Activated CD8-positive, alpha-beta memory T cell treated with anti-CD3 and anti-CD28 coated beads, Interleukin-2, amount 10 ng/mL, durations not matched to agents 7 days and 5 days (primary cell): ENCODE measurements at regions of chr10 and their contacts with region 1.

Region 1: DNA sequence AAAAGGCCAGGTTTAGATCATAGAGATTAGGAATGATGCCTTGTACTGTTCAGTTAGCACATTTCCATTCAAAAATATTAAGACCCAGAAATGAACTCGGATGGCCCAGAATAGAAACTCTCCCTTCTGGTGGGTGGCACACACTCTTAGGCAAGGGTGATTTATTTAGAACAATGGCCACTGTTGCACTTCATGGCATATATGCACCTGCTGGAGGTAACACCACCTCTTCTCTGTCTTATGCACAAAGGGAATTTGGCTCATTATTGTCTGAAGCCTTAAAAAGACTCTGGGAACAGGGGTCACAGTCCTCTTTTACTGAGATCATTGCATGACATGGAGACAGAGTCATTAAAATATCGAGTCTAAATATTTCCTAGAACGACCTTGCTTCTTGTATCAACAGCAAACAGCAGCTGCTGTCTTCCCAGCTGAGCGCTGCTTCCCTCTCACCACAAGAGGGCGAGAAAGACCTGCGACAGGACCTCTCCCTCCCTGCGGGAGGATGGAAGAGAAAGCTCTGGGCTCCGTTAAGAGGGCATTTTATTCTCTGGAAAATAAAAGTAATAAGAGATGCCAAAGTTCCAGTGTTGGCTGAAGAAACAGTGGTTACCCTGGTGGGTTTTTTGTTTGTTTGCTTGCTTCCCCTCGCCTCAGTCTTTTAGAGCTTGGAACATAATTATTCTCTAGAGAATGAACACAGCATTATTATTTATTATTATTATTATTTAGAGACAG is 13.6 kb upstream of the BAMBI start:
- DNase-seq: peak; percentile 80
- ATAC-seq: peak; percentile 72
- H3K4me3 Mint-ChIP-seq: no peak overlapping the region
- H3K27ac Mint-ChIP-seq: no peak overlapping the region
- H3K4me1 Mint-ChIP-seq: peaks cover 7% of the 10 kb centered on the region
- H3K27me3 Mint-ChIP-seq: peaks cover 38% of the 10 kb centered on the region

Region 2: GRCh38 chr10:28620251-28620650 is 43.5 kb before region 1 on chr10:
- CTCF ChIA-PET with region 1: no interaction called
- DNase-seq: no peak
- ATAC-seq: no peak
- H3K4me3 Mint-ChIP-seq: no peak overlapping the region
- H3K27ac Mint-ChIP-seq: no peak overlapping the region
- H3K4me1 Mint-ChIP-seq: no peaks in the 10 kb centered on the region
- H3K27me3 Mint-ChIP-seq: no peaks in the 10 kb centered on the region

Region 3: DNA sequence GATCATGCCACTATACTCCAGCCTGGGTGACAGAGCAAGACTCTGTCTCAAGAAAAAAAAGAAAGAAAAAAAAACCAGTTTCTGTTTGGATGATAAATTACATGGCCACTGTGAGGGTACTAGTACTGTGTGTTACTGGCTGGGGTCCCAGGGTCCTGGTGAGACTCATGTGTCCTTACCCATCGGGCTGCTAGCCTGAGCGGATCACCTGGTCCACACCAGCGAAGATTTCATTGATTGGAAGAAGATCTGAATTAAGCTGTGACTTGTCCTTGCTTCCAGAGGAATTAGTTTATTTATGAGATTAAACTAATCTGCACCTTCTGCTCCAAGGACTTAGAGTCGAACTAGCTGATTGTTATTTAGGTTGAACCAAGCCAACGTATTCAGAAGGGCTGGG is 26.4 kb before region 1 on chr10:
- CTCF ChIA-PET with region 1: no interaction called
- DNase-seq: no peak
- ATAC-seq: no peak
- H3K4me3 Mint-ChIP-seq: no peak overlapping the region
- H3K27ac Mint-ChIP-seq: no peak overlapping the region
- H3K4me1 Mint-ChIP-seq: no peaks in the 10 kb centered on the region
- H3K27me3 Mint-ChIP-seq: peaks cover 2% of the 10 kb centered on the region

Region 4: DNA sequence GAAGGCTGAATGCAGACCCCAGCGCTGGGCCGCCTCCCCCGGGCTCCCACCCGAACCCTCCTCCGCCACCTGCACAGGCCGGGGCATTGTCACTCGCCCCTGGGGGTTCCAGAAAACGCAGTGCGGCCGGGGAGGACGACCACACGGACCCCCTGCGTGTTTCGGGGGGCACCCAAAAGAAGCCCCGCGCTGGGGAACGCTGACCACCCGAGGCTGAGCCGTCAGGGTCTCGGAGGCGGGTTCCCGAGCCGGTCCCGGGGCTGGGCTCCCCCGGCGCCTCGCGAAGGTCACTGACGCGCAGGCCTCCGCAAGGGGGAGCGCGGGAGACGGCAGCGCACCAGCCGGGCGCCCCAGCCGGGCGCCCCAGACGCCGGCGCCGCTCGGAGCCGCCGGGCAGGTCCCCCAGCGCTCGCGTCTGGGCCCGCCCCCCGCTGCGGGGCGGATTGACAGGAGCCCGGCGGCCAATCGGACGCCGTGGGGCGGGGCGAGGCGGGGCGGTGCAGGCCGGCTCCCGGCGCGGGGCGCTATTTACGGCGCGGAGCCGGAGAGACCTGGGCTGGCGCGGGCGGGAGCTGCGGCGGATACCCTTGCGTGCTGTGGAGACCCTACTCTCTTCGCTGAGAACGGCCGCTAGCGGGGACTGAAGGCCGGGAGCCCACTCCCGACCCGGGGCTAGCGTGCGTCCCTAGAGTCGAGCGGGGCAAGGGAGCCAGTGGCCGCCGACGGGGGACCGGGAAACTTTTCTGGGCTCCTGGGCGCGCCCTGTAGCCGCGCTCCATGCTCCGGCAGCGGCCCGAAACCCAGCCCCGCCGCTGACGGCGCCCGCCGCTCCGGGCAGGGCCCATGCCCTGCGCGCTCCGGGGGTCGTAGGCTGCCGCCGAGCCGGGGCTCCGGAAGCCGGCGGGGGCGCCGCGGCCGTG is 13.5 kb after region 1 on chr10 and contains the start of gene BAMBI:
- CTCF ChIA-PET with region 1: interaction called, 22 read pairs
- DNase-seq: peak; percentile 91
- ATAC-seq: peak; percentile 99
- H3K4me3 Mint-ChIP-seq: peak within 1 kb of the TSS; percentile 73
- H3K27ac Mint-ChIP-seq: peak within 1 kb of the TSS; percentile 68
- H3K4me1 Mint-ChIP-seq: peaks cover 18% of the 10 kb centered on the region
- H3K27me3 Mint-ChIP-seq: peaks cover 80% of the 10 kb centered on the region
- total RNA-seq, gene BAMBI: 0.41 to 1.0 TPM

Region 5: DNA sequence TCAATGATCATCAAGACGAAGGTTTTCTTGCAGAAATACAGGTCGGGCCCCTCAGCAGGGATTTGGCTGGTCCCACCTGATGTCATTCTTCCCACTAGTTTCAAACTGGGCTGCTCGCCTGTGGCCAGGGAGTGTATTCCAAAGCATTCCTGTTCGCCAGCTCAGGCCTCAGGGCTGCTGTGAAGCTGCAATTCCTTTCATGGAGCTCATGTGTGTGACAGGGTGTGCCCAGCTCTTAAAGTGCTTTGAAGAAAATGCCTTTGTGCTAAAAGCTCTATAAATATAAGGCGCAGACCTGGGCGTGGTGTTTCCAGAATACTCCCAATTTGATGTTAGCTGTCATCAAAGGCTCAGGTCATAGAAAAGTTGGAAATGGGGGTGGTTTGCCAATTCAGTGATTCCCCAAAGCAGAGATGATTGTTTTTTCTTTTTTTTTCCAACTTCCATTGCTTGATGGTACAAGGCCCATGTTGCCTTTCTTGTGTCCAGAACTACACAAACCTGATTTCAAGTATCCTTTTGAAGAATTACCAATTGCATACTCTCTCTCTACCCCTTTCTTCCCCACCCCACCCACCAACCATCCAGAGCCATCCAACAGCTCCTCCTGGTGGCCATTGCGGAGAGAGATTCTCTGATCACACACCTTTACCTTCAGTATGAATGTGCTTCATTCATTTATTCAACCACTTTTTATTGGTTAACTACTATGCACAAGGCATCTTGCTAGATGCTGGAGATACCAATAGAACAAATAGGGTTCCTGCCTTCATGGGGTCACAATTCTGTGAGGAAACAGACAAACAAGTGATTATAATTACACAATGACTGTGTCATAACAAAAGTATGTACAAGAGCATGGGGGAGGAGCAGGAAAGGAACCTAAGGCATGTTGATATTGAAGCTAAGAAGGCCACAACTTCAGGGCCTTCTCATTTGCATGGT is 327.9 kb after region 1 on chr10:
- CTCF ChIA-PET with region 1: interaction called, 29 read pairs
- DNase-seq: peak; percentile 41
- ATAC-seq: no peak
- H3K4me3 Mint-ChIP-seq: no peak overlapping the region
- H3K27ac Mint-ChIP-seq: no peak overlapping the region
- H3K4me1 Mint-ChIP-seq: no peaks in the 10 kb centered on the region
- H3K27me3 Mint-ChIP-seq: no peaks in the 10 kb centered on the region

Region 6: DNA sequence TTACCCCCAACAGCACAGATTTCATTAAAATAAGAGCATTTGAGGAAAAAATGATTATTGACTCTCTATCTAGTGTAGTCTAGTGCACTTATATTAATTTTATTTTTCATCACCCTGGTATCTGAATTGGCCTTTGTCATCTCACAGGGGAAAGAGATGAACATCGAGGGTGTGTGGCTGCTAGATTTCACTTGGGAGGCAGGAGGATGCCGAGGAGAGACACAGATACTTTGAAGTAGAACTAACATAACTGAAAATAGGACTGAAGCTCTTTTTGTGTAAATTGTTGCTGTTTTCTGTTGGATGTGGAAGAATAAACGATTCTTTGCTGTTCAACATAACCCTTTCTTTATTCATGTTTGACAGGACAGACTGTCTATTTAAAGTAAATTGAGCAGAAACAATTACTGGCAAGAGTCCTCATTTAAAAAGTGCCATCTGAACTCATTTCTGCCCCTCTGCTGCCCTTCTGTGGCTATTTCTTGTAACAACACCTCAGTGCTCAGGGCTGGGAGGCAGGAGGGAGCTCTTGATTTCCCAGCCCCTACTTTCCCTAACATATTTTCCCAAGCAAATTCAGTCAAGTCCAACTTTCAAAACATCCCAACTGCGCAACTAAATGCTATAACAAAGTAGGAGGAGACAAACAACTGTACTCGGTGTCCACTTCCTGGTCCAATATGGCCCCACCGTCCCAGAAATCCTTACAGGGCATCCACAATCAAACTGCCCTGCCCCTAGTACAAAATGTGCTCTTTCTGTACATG is 640.7 kb after region 1 on chr10:
- CTCF ChIA-PET with region 1: interaction called, 14 read pairs
- DNase-seq: peak; percentile 47
- ATAC-seq: no peak
- H3K4me3 Mint-ChIP-seq: peak overlapping the region; percentile 4
- H3K27ac Mint-ChIP-seq: no peak overlapping the region
- H3K4me1 Mint-ChIP-seq: no peaks in the 10 kb centered on the region
- H3K27me3 Mint-ChIP-seq: peaks cover 13% of the 10 kb centered on the region